ENCODE measurements at regions of chr10 and their contacts with region 1.

Region 1: DNA sequence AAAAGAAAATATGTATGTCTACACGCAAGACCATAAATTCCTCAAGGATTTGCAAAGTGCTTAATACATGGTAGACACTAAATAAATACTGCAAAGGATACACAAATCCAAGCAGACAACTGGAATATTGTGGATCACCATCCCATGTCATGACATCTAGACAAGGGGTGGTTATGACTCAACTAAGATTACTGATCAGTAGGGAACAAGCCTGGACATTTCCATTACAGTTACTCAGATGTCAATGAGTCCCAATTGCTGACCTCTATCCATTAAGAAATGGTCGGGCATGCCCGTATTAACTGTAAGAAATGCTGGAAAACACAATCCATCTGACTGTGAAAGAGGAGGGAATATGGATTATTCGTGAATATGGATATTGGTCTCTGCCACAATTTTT is 27.6 kb upstream of the RUFY2 start:
- DNase-seq: no peak
- H3K4me3 ChIP-seq: no peak overlapping the region
- CTCF ChIP-seq: no peak
- POLR2A ChIP-seq: no peak

Region 2: GRCh38 chr10:68239596-68240150 is 195.0 kb before region 1 on chr10:
- intact Hi-C with region 1: loop called (anchors 5 kb)
- DNase-seq: no peak
- H3K4me3 ChIP-seq: no peak overlapping the region
- CTCF ChIP-seq: no peak
- POLR2A ChIP-seq: no peak

Measured in lower leg skin (tissue), 4 donors.